Ascending aorta (tissue), 2 donors: ENCODE measurements at regions of chr15 and their contacts with region 1.

Region 1: GRCh38 chr15:47473832-47474231 is 243.5 kb upstream of the SEMA6D start:
- DNase-seq: peak; percentile 16 to 87
- H3K4me3 ChIP-seq: peak overlapping the region in 1 of 2 donors; percentile 11
- H3K27ac ChIP-seq: peak overlapping the region; percentile 66 to 72
- H3K4me1 ChIP-seq: peaks cover 5 to 22% of the 10 kb centered on the region in 2 donors
- H3K27me3 ChIP-seq: no peaks in the 10 kb centered on the region
- CTCF ChIP-seq: no peak

Region 2: GRCh38 chr15:47987908-47988532 is 514.2 kb after region 1 on chr15:
- intact Hi-C with region 1: loop called (anchors 5 kb)
- DNase-seq: no peak
- H3K4me3 ChIP-seq: no peak overlapping the region
- H3K27ac ChIP-seq: no peak overlapping the region
- H3K4me1 ChIP-seq: no peaks in the 10 kb centered on the region
- H3K27me3 ChIP-seq: no peaks in the 10 kb centered on the region
- CTCF ChIP-seq: peak; percentile 52 to 71 (median 56)

Region 3: DNA sequence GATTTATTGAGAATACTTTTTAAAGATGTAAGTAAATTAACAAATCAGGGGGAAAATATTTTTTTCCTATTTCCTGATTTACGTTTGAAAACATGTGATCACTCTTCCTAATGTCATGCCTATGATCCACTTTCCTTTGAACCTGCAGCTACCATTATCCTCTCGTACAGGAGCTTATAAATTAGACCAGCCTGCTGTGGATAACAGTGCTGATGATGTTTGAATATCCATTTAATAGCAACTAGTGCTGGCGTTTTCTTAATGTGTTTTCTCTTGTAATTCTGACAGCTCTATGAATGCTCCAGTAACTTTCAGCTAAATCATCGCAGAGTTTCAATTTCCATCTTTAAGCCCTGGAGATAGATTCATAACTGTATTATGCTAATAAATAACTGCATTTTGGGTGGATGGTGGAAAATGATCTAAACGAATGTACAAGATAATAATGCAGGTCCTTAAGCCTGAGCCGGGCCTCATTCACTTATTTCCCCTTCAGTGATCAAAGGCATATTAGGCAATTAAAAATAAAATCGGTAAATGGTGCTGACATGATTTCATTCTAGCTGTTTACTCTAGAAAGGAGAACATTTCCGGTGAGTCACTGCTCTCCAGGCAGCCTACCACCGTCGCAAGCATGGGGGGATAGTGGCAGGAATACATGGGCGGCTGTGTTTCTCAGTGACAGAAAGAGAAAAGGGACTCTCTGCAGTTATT is 588.5 kb after region 1 on chr15:
- intact Hi-C with region 1: loop called (anchors 10 kb)
- DNase-seq: no peak
- H3K4me3 ChIP-seq: no peak overlapping the region
- H3K27ac ChIP-seq: no peak overlapping the region
- H3K4me1 ChIP-seq: peaks cover 4 to 16% of the 10 kb centered on the region in 2 donors
- H3K27me3 ChIP-seq: no peaks in the 10 kb centered on the region
- CTCF ChIP-seq: no peak